Aorta (tissue), 5 donors: ENCODE measurements at regions of chr11 and their contacts with region 1.

Region 1: GRCh38 chr11:20026629-20027555 is 133.4 kb downstream of the DBX1 start:
- DNase-seq: no peak
- ATAC-seq: no peak
- H3K4me3 ChIP-seq: no peak overlapping the region
- H3K27ac ChIP-seq: peak overlapping the region in 1 of 2 donors; percentile 3
- H3K4me1 ChIP-seq: peaks cover 12 to 14% of the 10 kb centered on the region in 2 donors
- H3K27me3 ChIP-seq: no peaks in the 10 kb centered on the region

Region 2: GRCh38 chr11:19988598-19988997 is 38.3 kb before region 1 on chr11:
- intact Hi-C with region 1: loop called in 1 of 2 experiments (anchors 5 kb)
- DNase-seq: peak; percentile 75 to 77
- ATAC-seq: peak; percentile 33
- H3K4me3 ChIP-seq: no peak overlapping the region
- H3K27ac ChIP-seq: peak overlapping the region in 1 of 2 donors; percentile 55
- H3K4me1 ChIP-seq: peaks cover 0 to 4% of the 10 kb centered on the region in 2 donors
- H3K27me3 ChIP-seq: no peaks in the 10 kb centered on the region

Region 3: DNA sequence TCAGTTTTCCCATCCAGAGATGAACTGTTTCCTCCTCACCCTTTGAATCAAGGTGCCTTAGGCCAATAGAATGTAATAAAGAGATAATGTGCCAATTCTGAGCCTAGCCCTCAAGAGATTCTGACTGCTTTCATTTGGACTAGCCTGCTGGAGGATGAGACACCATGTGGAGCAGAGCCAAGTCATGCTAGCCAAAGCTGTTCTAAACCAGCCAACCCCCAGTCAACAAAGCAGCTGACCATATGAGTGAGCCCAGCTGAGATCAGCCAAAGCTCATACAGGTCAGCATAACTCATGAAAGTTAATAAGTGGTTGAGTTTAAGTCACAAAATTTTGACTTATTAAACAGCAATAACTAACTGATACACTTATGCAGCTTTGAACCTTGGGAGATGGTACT is 200.0 kb after region 1 on chr11:
- intact Hi-C with region 1: no loop called
- DNase-seq: no peak
- ATAC-seq: no peak
- H3K4me3 ChIP-seq: no peak overlapping the region
- H3K27ac ChIP-seq: no peak overlapping the region
- H3K4me1 ChIP-seq: no peaks in the 10 kb centered on the region
- H3K27me3 ChIP-seq: peaks cover 0 to 2% of the 10 kb centered on the region in 2 donors